AG04450 (cell line): ENCODE measurements at regions of chr4 and their contacts with region 1.

Region 1: DNA sequence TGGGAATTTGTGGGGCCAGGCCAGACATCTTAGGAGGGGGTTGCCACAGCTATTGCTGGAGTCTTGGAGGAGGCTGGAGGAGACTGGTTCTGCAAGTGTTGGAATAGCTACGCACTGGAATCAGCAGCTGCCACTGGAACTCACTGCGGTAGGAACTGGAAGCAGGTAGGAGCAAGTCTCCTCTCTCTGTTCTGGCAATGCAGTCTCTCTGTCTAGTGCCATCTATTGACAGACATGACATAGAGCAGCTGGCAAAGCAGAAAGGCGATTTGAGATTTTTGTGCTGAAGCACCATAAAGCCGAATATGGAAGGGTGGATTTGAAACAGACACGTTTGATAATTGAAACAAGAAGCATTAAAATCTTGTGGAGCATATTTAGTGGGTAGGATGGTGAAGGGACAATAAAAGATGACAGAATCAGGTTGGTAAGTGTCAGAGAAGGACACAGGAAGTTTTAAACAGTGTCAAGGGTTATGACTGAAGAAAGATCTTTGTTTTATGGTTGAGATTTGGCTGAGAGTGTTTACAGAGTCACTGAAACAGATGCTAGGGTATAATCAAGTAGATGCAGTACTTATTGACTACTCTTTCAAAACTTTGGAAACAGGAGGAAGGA is 23.5 kb upstream of the SYNPO2 start:
- DNase-seq: no peak
- H3K4me3 ChIP-seq: no peak overlapping the region
- H3K27ac ChIP-seq: no peak overlapping the region
- H3K27me3 ChIP-seq: peaks cover 2% of the 10 kb centered on the region
- CTCF ChIP-seq: peak; percentile 69

Region 2: GRCh38 chr4:118850488-118851173 is 14.6 kb before region 1 on chr4:
- CTCF ChIA-PET with region 1: interaction called, 12 read pairs
- POLR2A ChIA-PET with region 1: interaction called, 3 read pairs
- DNase-seq: no peak
- H3K4me3 ChIP-seq: peak overlapping the region; percentile 56
- H3K27ac ChIP-seq: no peak overlapping the region
- H3K27me3 ChIP-seq: no peaks in the 10 kb centered on the region
- CTCF ChIP-seq: no peak

Region 3: DNA sequence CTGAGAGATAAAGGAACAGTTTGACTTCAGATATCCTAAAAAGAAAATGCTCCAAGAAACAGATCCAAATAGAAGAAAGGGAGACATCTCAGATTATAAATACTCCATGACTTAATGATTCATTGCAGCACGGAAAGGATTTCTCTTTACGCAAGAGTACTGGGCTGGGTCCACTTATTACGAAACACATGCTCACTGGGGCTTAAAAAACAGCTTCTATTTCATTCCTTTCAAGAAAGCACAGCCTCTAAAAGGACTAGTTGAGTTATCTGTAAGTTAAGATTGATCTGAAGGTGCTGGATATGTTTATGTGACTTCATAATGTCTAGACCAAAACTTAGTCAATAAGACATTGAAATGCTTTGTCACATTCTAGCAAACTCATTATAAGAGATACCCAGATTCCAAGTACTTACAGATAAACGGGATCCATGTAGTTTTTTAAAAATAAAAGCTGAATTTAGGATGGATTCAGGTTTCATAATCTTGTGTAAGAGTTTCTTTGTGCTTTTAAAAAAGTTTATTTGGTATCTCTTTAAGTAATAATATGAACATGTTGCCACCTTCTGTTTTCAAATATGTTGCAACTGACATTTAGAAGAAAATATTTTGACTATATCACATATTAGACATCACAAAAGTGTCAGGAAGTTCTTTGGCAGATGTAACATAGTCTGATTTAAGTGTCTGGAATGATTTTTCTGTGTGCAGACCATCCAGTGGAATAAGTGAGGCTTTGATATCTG is 160.9 kb after region 1 on chr4:
- CTCF ChIA-PET with region 1: no interaction called
- POLR2A ChIA-PET with region 1: no interaction called
- DNase-seq: peak; percentile 78
- H3K4me3 ChIP-seq: no peak overlapping the region; the same call in 1 of the 2 replicates
- H3K27ac ChIP-seq: peak overlapping the region; percentile 94
- H3K27me3 ChIP-seq: no peaks in the 10 kb centered on the region
- CTCF ChIP-seq: no peak